ENCODE measurements at regions of chr17 and their contacts with region 1.

Region 1: DNA sequence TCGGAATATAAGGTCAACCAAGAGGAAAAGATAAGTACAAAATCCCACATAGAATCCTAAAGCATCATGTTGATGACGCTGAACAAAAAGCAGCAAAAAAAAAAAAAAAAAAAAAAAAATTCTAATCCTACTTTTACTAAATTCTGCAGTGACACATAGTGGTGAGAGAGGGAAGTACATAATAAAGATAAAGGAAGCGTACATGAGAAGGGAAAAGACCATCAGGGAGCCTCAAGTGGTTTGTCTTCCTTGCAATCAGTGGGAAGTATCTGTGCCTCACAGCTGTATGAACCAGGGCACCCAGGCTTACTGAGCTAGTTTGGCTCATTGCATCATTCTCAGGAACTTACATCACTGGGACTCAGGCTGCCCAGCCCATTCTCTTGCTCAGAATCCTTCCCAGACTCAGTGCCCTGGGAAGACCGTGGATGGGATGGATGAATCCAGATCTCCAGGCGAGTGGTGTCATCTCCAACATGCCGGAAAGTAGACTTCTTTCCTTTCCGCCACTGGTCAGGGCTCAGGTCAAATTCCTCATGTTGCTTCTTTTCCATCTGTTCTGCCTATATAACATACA is 21.2 kb downstream of the SMG6 start:
- DNase-seq: peak in 2 of 5 donors; percentile 56 to 65
- H3K4me3 ChIP-seq: no peak overlapping the region
- H3K4me3 Mint-ChIP-seq: peak overlapping the region in 1 of 7 donors; percentile 24
- H3K27ac ChIP-seq: no peak overlapping the region
- H3K27ac Mint-ChIP-seq: peak overlapping the region in 7 of 8 donors; percentile 11 to 85 (median 57)
- H3K4me1 ChIP-seq: peaks cover 7% of the 10 kb centered on the region
- H3K4me1 Mint-ChIP-seq: peaks cover 7 to 14% (median 14%) of the 10 kb centered on the region in 3 donors
- H3K27me3 ChIP-seq: no peaks in the 10 kb centered on the region
- H3K27me3 Mint-ChIP-seq: no peaks in the 10 kb centered on the region

Region 2: GRCh38 chr17:2266045-2266864 is 16.1 kb before region 1 on chr17:
- CTCF ChIA-PET with region 1: interaction called, 14 read pairs
- POLR2A ChIA-PET with region 1: interaction called, 12 read pairs
- DNase-seq: peak; percentile 76 to 94 (median 92)
- H3K4me3 ChIP-seq: peak overlapping the region; percentile 52
- H3K4me3 Mint-ChIP-seq: peak overlapping the region; percentile 61 to 92 (median 85)
- H3K27ac ChIP-seq: peak overlapping the region; percentile 64
- H3K27ac Mint-ChIP-seq: peak overlapping the region; percentile 96 to 100 (median 98)
- H3K4me1 ChIP-seq: peaks cover 77% of the 10 kb centered on the region
- H3K4me1 Mint-ChIP-seq: peaks cover 71 to 87% (median 84%) of the 10 kb centered on the region in 3 donors
- H3K27me3 ChIP-seq: no peaks in the 10 kb centered on the region
- H3K27me3 Mint-ChIP-seq: peaks cover 0 to 2% of the 10 kb centered on the region in 2 donors